Mammary epithelial cell (primary cell): ENCODE measurements at regions of chr2 and their contacts with region 1.

Region 1: GRCh38 chr2:178522950-178523595 is 42.8 kb downstream of the PLEKHA3 start:
- DNase-seq: peak; percentile 59
- H3K4me3 ChIP-seq: peak overlapping the region; percentile 35 to 65 (median 61)
- H3K27ac ChIP-seq: peak overlapping the region; percentile 44
- H3K4me1 ChIP-seq: peaks cover 2% of the 10 kb centered on the region
- H3K27me3 ChIP-seq: no peaks in the 10 kb centered on the region
- CTCF ChIP-seq: peak; percentile 75 to 76

Region 2: GRCh38 chr2:178112202-178113152 is 410.6 kb before region 1 on chr2 and contains the start of gene RBM45:
- CTCF ChIA-PET with region 1: interaction called, 3 read pairs
- dilution Hi-C with region 1: no loop called
- in situ Hi-C with region 1: no loop called
- intact Hi-C with region 1: loop called (anchors 2 kb)
- DNase-seq: peak; percentile 95
- H3K4me3 ChIP-seq: peak within 1 kb of the TSS; percentile 74 to 85 (median 75)
- H3K27ac ChIP-seq: peak within 1 kb of the TSS; percentile 22
- H3K4me1 ChIP-seq: peaks cover 17% of the 10 kb centered on the region
- H3K27me3 ChIP-seq: no peaks in the 10 kb centered on the region
- CTCF ChIP-seq: peak; percentile 94 to 100
- total RNA-seq, gene RBM45: 12.1 to 15.5 TPM

Region 3: GRCh38 chr2:178450774-178451525 is 72.1 kb before region 1 on chr2 and contains the starts of genes PJVK and PRKRA:
- CTCF ChIA-PET with region 1: no interaction called
- dilution Hi-C with region 1: no loop called
- in situ Hi-C with region 1: no loop called
- intact Hi-C with region 1: loop called (anchors 1 kb)
- DNase-seq: peak; percentile 96
- H3K4me3 ChIP-seq: peak within 1 kb of the TSS; percentile 74 to 98 (median 88)
- H3K27ac ChIP-seq: peak within 1 kb of the TSS; percentile 79
- H3K4me1 ChIP-seq: peaks cover 27% of the 10 kb centered on the region
- H3K27me3 ChIP-seq: no peaks in the 10 kb centered on the region
- CTCF ChIP-seq: no peak
- total RNA-seq, gene PJVK: 1.3 to 4.3 TPM
- total RNA-seq, gene PRKRA: 49.0 to 66.8 TPM

Region 4: GRCh38 chr2:178469219-178469849 is 53.7 kb before region 1 on chr2:
- CTCF ChIA-PET with region 1: no interaction called
- dilution Hi-C with region 1: loop called (anchors 5 kb)
- in situ Hi-C with region 1: no loop called
- intact Hi-C with region 1: no loop called
- DNase-seq: no peak
- H3K4me3 ChIP-seq: no peak overlapping the region
- H3K27ac ChIP-seq: no peak overlapping the region
- H3K4me1 ChIP-seq: no peaks in the 10 kb centered on the region
- H3K27me3 ChIP-seq: no peaks in the 10 kb centered on the region
- CTCF ChIP-seq: no peak

Region 5: DNA sequence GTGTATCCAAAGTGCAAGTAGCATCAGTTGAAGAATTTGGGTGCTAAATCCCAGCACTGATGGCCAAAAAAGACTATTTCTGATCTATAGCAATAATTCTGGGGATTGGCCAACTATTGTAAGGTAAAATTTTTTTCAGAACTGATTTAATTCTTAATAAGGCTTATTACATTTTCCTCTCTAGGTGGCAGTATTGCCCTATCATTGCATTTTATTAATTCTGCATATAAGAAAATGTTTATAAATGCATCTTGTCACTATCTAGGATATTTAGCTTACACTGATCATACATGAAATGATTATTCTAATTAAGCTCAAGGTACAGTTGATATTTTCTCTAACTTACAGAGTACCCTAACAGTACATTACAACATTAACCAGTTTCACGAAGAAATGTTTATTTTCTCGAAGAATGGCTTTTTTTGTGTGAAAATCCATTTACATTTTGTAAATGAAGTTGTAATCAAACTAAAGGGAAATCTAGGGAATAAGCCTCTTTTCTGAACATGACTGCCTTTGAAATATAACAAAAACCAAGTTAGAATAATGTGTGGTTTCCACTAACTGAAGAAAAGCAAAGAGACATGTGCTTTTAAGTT is 273.1 kb after region 1 on chr2:
- CTCF ChIA-PET with region 1: no interaction called
- dilution Hi-C with region 1: no loop called
- in situ Hi-C with region 1: no loop called
- intact Hi-C with region 1: no loop called
- DNase-seq: peak; percentile 10
- H3K4me3 ChIP-seq: no peak overlapping the region
- H3K27ac ChIP-seq: no peak overlapping the region
- H3K4me1 ChIP-seq: no peaks in the 10 kb centered on the region
- H3K27me3 ChIP-seq: no peaks in the 10 kb centered on the region
- CTCF ChIP-seq: peak; percentile 40 to 57